ENCODE measurements at regions of chr7 and their contacts with region 1.

Region 1: DNA sequence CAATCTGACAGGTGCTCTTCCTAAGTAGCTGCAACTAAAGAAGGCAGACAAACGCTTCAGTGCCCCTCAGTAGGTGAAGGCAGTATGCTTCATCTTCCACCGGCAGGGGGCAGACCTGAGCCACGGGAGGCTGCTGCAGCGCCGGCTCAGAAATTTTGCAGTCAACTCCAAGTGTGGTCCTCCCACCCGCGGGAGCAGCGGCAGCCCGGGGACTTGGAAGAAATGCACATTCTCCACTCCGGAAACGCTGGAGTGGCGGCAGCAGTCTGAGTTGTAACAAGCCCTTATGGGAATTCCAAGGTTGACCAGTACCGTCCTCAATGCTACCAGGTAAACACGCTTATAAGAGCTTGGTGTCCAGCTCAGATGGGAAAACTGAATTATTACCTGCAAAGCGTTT is 3.4 kb downstream of the IGFBP3 start:
- DNase-seq: no peak
- H3K4me3 ChIP-seq: peak overlapping the region; percentile 78
- CTCF ChIP-seq: peak; percentile 91

Region 2: DNA sequence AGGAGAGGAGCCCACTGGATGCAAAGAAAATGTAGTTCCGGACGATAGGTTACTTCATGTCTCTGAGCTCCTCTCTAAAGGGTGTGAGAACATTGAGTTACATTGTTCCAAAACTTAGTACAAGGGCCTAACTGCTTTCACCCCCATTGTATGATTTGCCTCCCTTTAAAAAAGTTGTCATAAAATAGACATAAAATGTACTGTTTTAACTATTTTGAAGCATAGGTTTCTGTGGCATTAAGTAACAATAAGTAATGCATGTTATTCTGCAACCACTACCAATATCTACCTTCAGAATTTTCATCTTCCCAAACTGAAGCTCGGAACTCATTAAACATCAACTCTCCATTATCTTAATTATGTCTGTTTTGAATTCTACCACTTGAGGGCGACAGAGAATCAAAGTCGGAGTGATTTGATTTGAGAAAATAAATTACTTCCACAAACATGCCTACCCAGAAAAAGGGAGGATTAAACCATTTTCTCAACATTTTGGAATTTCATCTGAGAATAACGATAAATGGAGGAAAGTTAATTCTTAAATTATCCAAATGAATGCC is 26.7 kb before region 1 on chr7:
- CTCF ChIA-PET with region 1: interaction called, 54 read pairs
- POLR2A ChIA-PET with region 1: interaction called, 7 read pairs
- DNase-seq: no peak
- H3K4me3 ChIP-seq: no peak overlapping the region
- CTCF ChIP-seq: peak; percentile 30

Region 3: GRCh38 chr7:45902820-45903219 is 14.8 kb before region 1 on chr7:
- CTCF ChIA-PET with region 1: interaction called, 58 read pairs
- POLR2A ChIA-PET with region 1: no interaction called
- DNase-seq: no peak
- H3K4me3 ChIP-seq: no peak overlapping the region
- CTCF ChIP-seq: no peak

Region 4: DNA sequence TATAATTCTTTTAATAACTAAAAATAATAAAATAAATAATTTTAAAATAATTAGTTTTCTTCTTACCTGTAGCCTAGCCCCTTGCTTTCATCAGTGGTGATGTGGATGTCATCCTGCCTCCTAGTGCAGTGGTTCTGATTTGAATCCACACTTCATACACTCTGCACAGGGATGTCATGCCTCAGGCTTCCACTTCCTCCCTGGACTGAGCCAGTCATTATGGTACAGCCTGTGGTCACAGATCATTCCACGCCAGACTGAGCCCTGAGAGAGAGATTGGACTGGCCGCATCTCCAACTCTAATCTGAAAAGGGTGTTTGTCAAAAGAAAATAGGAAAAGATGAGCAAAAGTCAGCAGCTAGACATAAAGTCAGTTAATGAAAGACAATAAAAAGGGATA is 439.6 kb after region 1 on chr7:
- CTCF ChIA-PET with region 1: interaction called, 320 read pairs
- POLR2A ChIA-PET with region 1: interaction called, 4 read pairs
- DNase-seq: no peak
- H3K4me3 ChIP-seq: no peak overlapping the region
- CTCF ChIP-seq: no peak

Region 5: GRCh38 chr7:47179812-47180515 is 1262.3 kb after region 1 on chr7:
- CTCF ChIA-PET with region 1: interaction called, 259 read pairs
- POLR2A ChIA-PET with region 1: interaction called, 5 read pairs
- DNase-seq: peak; percentile 24
- H3K4me3 ChIP-seq: no peak overlapping the region
- CTCF ChIP-seq: peak; percentile 74